ENCODE measurements at regions of chr11 and their contacts with region 1.

Region 1: GRCh38 chr11:56783448-56784041 is 35.0 kb upstream of the OR9G4 start:
- DNase-seq: peak; percentile 17
- H3K4me3 Mint-ChIP-seq: no peak overlapping the region
- H3K27ac Mint-ChIP-seq: no peak overlapping the region
- H3K4me1 Mint-ChIP-seq: no peaks in the 10 kb centered on the region
- H3K27me3 Mint-ChIP-seq: no peaks in the 10 kb centered on the region
- CTCF ChIP-seq: peak; percentile 41

Region 2: DNA sequence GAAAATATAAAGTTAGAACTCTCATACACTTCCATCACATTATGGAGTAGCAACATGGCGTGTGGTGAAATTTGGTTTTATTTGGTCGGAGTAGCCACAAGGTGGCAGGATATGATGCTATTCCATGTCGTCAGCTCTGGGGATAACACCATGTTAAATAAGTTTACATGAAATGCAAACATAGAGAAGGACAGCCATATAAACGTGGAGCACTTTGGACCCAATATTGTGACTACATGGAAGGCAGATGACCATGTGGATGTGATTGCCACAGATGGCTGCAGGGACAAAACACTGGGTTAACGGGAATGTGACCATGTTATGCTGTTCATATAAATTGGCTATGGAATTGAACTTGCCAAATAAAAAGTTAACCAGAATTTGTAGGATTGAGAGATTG is 261.5 kb before region 1 on chr11:
- CTCF ChIA-PET with region 1: no interaction called
- intact Hi-C with region 1: loop called (anchors 1 kb)
- DNase-seq: peak; percentile 10
- H3K4me3 Mint-ChIP-seq: no peak overlapping the region
- H3K27ac Mint-ChIP-seq: no peak overlapping the region
- H3K4me1 Mint-ChIP-seq: no peaks in the 10 kb centered on the region
- H3K27me3 Mint-ChIP-seq: no peaks in the 10 kb centered on the region
- CTCF ChIP-seq: no peak

Region 3: GRCh38 chr11:56700242-56700913 is 83.2 kb before region 1 on chr11:
- CTCF ChIA-PET with region 1: no interaction called
- intact Hi-C with region 1: loop called (anchors 5 kb)
- DNase-seq: peak; percentile 51
- H3K4me3 Mint-ChIP-seq: no peak overlapping the region
- H3K27ac Mint-ChIP-seq: no peak overlapping the region
- H3K4me1 Mint-ChIP-seq: no peaks in the 10 kb centered on the region
- H3K27me3 Mint-ChIP-seq: no peaks in the 10 kb centered on the region
- CTCF ChIP-seq: no peak

Region 4: GRCh38 chr11:57196596-57196995 is 413.1 kb after region 1 on chr11:
- CTCF ChIA-PET with region 1: no interaction called
- intact Hi-C with region 1: no loop called
- DNase-seq: no peak
- H3K4me3 Mint-ChIP-seq: no peak overlapping the region
- H3K27ac Mint-ChIP-seq: no peak overlapping the region
- H3K4me1 Mint-ChIP-seq: no peaks in the 10 kb centered on the region
- H3K27me3 Mint-ChIP-seq: peaks cover 63% of the 10 kb centered on the region
- CTCF ChIP-seq: no peak